ENCODE measurements at regions of chr6 and their contacts with region 1.

Region 1: GRCh38 chr6:33248925-33249731 is 22.5 kb downstream of the VPS52 start:
- DNase-seq: peak; percentile 97
- ATAC-seq: peak; percentile 95
- H3K4me3 Mint-ChIP-seq: peak overlapping the region; percentile 86
- H3K27ac Mint-ChIP-seq: peak overlapping the region; percentile 87
- H3K4me1 Mint-ChIP-seq: peaks cover 18% of the 10 kb centered on the region
- H3K27me3 Mint-ChIP-seq: peaks cover 26% of the 10 kb centered on the region
- CTCF ChIP-seq: no peak

Region 2: DNA sequence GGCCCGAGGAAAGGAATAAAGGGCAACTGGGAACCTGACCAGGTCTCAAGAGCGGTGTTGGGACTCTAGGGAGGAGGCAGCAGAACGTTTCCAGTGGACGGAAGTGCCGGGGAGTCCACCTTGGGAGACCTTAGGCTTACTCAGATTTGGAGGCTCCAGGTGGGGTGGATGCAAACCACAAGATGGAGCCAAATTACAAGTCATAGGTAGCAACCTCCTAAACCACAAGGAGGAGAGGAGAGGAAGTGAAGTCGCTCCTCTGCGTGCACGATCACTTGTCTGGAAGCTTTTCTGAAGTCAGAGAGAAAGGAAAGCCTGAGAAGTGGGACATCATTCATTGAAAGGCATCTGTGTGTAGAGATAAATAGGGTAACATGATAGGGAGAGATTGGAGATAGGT is 249.1 kb before region 1 on chr6:
- CTCF ChIA-PET with region 1: interaction called, 11 read pairs
- POLR2A ChIA-PET with region 1: no interaction called
- DNase-seq: peak; percentile 67
- ATAC-seq: peak; percentile 98
- H3K4me3 Mint-ChIP-seq: no peak overlapping the region
- H3K27ac Mint-ChIP-seq: no peak overlapping the region
- H3K4me1 Mint-ChIP-seq: peaks cover 4% of the 10 kb centered on the region
- H3K27me3 Mint-ChIP-seq: peaks cover 2% of the 10 kb centered on the region; the same call in 1 of the 2 replicates
- CTCF ChIP-seq: peak; percentile 21; the same call in 1 of the 2 replicates

Region 3: DNA sequence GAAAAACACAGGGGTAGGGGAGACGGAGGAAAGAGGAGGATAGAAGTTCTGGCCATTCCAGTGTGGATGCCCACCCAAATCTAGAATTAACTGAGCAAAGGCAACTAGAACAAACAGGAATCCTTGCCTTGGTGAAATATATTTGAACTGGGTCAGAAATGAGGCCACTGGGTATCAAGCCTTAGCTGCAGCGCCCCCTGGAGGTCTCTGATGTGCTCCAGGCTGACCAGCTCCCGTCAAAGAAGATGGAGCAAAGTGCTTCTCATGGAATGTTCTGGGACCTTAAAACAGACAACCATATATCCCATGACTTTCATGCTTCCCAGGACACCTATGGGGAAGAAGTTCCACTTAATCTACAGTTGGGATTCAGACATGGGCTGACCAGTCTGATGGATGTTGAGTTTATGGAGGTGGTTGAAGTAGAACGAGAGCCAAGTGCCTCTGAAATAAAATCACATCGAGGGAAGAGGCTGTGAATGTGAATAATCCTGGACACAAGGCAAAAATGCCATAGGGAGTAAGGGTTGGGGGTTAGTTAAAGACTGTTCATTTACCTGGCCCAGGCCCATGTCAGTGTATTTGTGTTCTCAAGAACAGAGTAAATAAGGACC is 122.9 kb before region 1 on chr6:
- CTCF ChIA-PET with region 1: interaction called, 51 read pairs
- POLR2A ChIA-PET with region 1: no interaction called
- DNase-seq: peak; percentile 91
- ATAC-seq: peak; percentile 61
- H3K4me3 Mint-ChIP-seq: peak overlapping the region; percentile 9; the same call in 1 of the 2 replicates
- H3K27ac Mint-ChIP-seq: peak overlapping the region; percentile 91
- H3K4me1 Mint-ChIP-seq: peaks cover 51% of the 10 kb centered on the region
- H3K27me3 Mint-ChIP-seq: peaks cover 2% of the 10 kb centered on the region; the same call in 1 of the 2 replicates
- CTCF ChIP-seq: peak; percentile 88

Region 4: DNA sequence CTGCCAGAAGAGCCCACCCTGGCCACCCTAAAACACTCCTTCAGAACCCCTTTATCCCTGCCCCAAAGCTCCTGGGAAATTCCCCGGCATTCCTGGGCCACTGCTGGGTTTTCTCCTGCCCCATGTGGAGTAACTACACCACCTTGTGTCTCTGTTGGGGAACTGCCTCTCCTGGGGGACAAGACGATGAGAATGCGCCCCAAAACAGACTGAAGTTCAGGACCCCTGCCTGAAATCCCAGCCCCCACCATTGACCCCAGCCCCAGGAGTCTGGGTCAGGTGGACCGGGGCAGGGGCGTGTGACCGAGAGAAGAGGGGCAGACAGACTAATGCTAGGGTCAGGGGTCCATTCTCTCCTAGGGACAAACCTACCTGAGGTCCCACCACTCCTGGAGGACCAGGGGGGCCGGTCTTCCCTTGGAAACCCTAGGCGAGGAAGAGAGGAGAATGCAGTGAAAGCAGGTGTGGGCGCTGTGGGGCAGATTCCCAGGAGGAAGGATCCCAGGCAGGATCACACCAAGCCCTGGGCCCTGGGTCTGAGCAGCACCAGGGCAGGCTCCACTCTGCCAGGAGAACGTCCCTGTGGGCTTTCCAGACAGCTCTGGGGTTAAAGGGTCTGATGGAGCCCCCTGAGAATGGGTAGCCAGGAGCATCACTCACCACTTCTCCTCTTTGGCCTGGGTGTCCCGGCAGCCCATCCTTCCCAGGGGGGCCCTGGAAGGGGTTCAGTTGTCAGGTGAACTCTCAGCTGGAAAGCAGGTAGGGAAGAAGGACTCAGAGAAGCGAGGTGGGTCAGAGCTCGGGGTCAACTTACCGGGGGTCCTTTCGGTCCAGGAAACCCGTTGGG is 76.2 kb before region 1 on chr6:
- CTCF ChIA-PET with region 1: interaction called, 34 read pairs
- POLR2A ChIA-PET with region 1: no interaction called
- DNase-seq: peak; percentile 71
- ATAC-seq: peak; percentile 79
- H3K4me3 Mint-ChIP-seq: no peak overlapping the region
- H3K27ac Mint-ChIP-seq: no peak overlapping the region; the same call in 1 of the 2 replicates
- H3K4me1 Mint-ChIP-seq: 0 out of 2 replicates have a peak, but pooled peaks cover 3% of the 10 kb centered on the region
- H3K27me3 Mint-ChIP-seq: peaks cover 7% of the 10 kb centered on the region; the same call in 1 of the 2 replicates
- CTCF ChIP-seq: peak; percentile 51

Region 5: GRCh38 chr6:33200219-33201146 is 48.6 kb before region 1 on chr6 and contains the starts of genes RXRB and SLC39A7:
- CTCF ChIA-PET with region 1: interaction called, 31 read pairs
- POLR2A ChIA-PET with region 1: interaction called, 5 read pairs
- DNase-seq: peak; percentile 99
- ATAC-seq: peak; percentile 58
- H3K4me3 Mint-ChIP-seq: peak within 1 kb of the TSS; percentile 97
- H3K27ac Mint-ChIP-seq: peak within 1 kb of the TSS; percentile 99
- H3K4me1 Mint-ChIP-seq: peaks cover 54% of the 10 kb centered on the region
- H3K27me3 Mint-ChIP-seq: peaks cover 4% of the 10 kb centered on the region
- CTCF ChIP-seq: no peak
- total RNA-seq, gene RXRB: 21.5 to 24.5 TPM (median 23.3 TPM) in 3 replicates
- total RNA-seq, gene SLC39A7: 131 to 163 TPM (median 134 TPM) in 3 replicates

Region 6: GRCh38 chr6:33215271-33216116 is 33.6 kb before region 1 on chr6:
- CTCF ChIA-PET with region 1: interaction called, 83 read pairs
- POLR2A ChIA-PET with region 1: interaction called, 4 read pairs
- DNase-seq: no peak
- ATAC-seq: no peak
- H3K4me3 Mint-ChIP-seq: no peak overlapping the region
- H3K27ac Mint-ChIP-seq: no peak overlapping the region
- H3K4me1 Mint-ChIP-seq: peaks cover 40% of the 10 kb centered on the region
- H3K27me3 Mint-ChIP-seq: peaks cover 87% of the 10 kb centered on the region
- CTCF ChIP-seq: no peak

Region 7: DNA sequence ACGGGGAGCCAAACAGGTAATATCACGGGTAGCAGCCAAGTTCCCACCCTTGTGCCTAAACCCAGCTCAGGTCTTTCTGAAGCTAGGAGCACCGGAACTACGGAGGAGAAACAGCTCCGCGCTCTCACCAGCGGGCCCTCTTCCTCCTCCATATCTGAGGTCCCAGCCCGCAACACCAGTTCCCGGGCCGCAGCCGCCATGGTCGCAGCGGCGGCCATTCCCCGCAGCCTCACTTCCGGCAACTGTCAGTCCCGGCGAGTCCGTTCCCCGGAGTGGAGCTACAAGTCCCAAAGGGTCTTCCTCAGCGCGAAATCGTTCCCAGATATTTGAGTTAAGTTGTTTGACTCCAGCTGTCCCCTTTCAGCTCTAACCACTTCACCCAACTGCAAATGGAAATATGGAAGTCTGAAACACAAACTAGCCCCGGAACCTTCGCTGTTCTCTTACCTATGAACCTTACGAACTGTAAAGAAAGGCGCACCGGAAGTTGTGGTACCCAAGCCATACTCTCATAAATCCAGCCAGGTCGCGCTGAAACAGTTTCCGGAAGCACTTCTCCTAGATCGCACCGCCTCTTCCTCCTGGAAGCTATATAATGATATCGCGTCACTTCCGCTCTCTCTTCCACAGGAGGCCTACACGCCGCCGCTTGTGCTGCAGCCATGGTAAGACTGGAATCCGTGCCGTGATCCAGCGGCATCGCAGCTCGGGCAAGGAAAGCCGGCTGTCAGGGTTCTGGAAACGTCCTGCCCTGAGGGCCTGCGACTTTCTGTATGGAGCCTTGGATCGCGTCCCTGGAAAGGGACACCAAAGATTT is 22.5 kb after region 1 on chr6 and contains the starts of genes RPS18 and VPS52:
- CTCF ChIA-PET with region 1: interaction called, 24 read pairs
- POLR2A ChIA-PET with region 1: interaction called, 11 read pairs
- DNase-seq: peak; percentile 84
- ATAC-seq: peak; percentile 78
- H3K4me3 Mint-ChIP-seq: peak within 1 kb of the TSS; percentile 96
- H3K27ac Mint-ChIP-seq: peak within 1 kb of the TSS; percentile 100
- H3K4me1 Mint-ChIP-seq: peaks cover 50% of the 10 kb centered on the region
- H3K27me3 Mint-ChIP-seq: no peaks in the 10 kb centered on the region
- CTCF ChIP-seq: no peak
- total RNA-seq, gene RPS18: 2,857 to 3,321 TPM (median 3,240 TPM) in 3 replicates
- total RNA-seq, gene VPS52: 43.0 to 46.8 TPM (median 43.1 TPM) in 3 replicates

Region 8: GRCh38 chr6:33454009-33454946 is 205.2 kb after region 1 on chr6 and contains the start of gene ZBTB9:
- CTCF ChIA-PET with region 1: no interaction called
- POLR2A ChIA-PET with region 1: no interaction called
- DNase-seq: peak; percentile 93
- ATAC-seq: peak; percentile 97
- H3K4me3 Mint-ChIP-seq: peak within 1 kb of the TSS; percentile 92
- H3K27ac Mint-ChIP-seq: peak within 1 kb of the TSS; percentile 77
- H3K4me1 Mint-ChIP-seq: peaks cover 17% of the 10 kb centered on the region
- H3K27me3 Mint-ChIP-seq: peaks cover 4% of the 10 kb centered on the region
- CTCF ChIP-seq: no peak
- total RNA-seq, gene ZBTB9: 19.4 to 21.2 TPM (median 20.8 TPM) in 3 replicates

Measured in WTC11 (cell line).